Naive thymus-derived CD4-positive, alpha-beta T cell (primary cell): ENCODE measurements at regions of chr3 and their contacts with region 1.

Region 1: GRCh38 chr3:36876181-36876936 is 68.5 kb downstream of the TRANK1 start:
- DNase-seq: peak in 8 of 9 donors; percentile 26 to 73 (median 62)
- ATAC-seq: peak; percentile 93
- H3K4me3 ChIP-seq: peak overlapping the region; percentile 39
- H3K4me3 Mint-ChIP-seq: peak overlapping the region; percentile 67 to 88 (median 80)
- H3K27ac ChIP-seq: peak overlapping the region; percentile 73
- H3K27ac Mint-ChIP-seq: peak overlapping the region; percentile 91 to 96 (median 95)
- H3K4me1 ChIP-seq: peaks cover 21 to 45% of the 10 kb centered on the region in 2 donors
- H3K4me1 Mint-ChIP-seq: peaks cover 34 to 68% (median 55%) of the 10 kb centered on the region in 7 donors
- H3K27me3 ChIP-seq: no peaks in the 10 kb centered on the region
- H3K27me3 Mint-ChIP-seq: peaks cover 0 to 7% (median 0%) of the 10 kb centered on the region in 5 donors

Region 2: DNA sequence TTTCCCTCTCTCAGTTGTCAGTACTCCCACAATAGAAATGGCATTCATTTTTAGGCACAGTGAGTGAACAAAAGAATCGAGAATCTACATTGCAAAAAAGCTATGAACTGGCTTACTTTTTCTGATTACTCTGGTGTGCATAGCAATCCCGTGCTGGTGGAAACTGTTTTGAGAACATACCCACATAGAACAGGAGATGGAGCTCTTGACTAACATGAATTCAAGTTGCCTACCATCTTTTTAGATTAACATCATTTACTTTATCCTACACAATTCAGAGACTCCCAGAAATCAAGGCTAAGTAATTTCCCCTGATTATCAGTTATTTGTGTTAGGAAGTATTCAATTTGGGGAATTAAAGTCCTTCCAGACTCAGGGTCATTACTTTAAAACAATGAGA is 910.5 kb before region 1 on chr3:
- CTCF ChIA-PET with region 1: no interaction called
- POLR2A ChIA-PET with region 1: no interaction called
- intact Hi-C with region 1: no loop called
- DNase-seq: peak in 2 of 9 donors; percentile 0 to 5
- ATAC-seq: no peak
- H3K4me3 ChIP-seq: no peak overlapping the region
- H3K4me3 Mint-ChIP-seq: no peak overlapping the region
- H3K27ac ChIP-seq: no peak overlapping the region
- H3K27ac Mint-ChIP-seq: no peak overlapping the region
- H3K4me1 ChIP-seq: no peaks in the 10 kb centered on the region
- H3K4me1 Mint-ChIP-seq: peaks cover 0 to 27% (median 5%) of the 10 kb centered on the region in 7 donors
- H3K27me3 ChIP-seq: no peaks in the 10 kb centered on the region
- H3K27me3 Mint-ChIP-seq: no peaks in the 10 kb centered on the region

Region 3: DNA sequence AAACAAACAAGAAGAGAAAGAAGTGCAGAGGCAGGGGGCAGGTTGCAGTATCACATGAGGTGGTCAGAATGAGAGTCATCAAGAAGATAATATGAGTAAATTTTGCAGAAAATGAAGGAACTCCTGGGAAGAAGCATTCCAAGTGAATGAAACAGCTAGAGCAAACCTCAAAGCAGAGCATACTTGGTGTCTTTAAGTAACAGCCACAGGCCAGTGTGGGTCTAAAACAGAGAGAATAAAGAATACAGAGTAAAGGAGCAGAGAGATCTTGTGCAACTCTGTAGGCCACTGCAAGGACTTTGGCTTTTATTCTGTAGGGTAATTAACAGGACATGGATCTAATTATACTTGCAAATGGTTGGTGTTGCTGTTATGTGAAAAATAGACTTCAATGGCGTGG is 414.8 kb before region 1 on chr3:
- CTCF ChIA-PET with region 1: no interaction called
- POLR2A ChIA-PET with region 1: no interaction called
- intact Hi-C with region 1: no loop called
- DNase-seq: no peak
- ATAC-seq: no peak
- H3K4me3 ChIP-seq: no peak overlapping the region
- H3K4me3 Mint-ChIP-seq: no peak overlapping the region
- H3K27ac ChIP-seq: no peak overlapping the region
- H3K27ac Mint-ChIP-seq: no peak overlapping the region
- H3K4me1 ChIP-seq: no peaks in the 10 kb centered on the region
- H3K4me1 Mint-ChIP-seq: no peaks in the 10 kb centered on the region
- H3K27me3 ChIP-seq: no peaks in the 10 kb centered on the region
- H3K27me3 Mint-ChIP-seq: peaks cover 0 to 7% (median 0%) of the 10 kb centered on the region in 5 donors

Region 4: DNA sequence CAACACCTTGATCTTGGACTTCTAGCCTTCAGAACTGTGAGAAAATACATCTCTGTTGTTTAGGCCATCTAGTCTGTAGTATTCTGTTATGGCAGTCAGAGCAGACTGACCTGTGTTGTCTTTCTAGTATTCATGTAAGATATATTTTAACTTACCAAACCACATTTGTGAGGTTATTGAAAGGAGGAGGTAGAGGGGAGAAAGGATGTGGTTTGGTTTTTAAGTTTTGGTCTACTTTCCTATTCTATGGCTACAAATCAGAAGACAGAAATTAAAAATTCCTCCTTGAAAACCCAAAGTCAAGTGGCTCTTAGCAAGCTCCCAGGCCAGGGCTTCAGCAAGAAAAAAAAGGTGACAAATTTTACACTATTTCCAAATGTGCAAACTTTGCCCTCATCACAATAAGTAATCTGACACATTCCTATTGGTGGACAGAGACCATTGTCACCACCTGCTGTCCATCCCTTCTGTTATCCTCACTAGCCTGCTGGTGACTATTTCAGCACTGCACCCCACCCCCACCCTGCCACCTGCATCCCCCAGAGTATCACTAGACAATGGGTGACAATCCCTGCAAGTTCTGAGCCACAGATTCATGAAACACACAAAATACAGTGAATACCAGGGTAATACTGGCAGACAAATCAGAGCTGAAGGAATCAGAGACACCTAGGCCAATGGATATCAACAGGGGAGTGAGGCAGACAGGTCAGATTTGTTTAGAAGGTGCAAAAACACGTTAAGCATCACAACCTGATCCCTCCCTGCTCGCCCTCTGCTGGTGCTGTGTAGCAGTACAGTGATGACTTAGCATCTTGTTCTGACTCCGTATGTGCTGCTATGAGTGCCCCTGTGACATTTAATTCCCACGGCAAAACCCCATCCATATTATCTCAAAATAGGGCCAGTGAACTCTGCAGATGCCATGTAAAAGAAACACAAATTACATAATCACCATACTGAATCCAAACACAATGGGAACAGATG is 33.0 kb before region 1 on chr3:
- CTCF ChIA-PET with region 1: interaction called, 3 read pairs
- POLR2A ChIA-PET with region 1: interaction called, 4 read pairs
- intact Hi-C with region 1: loop called in 1 of 2 experiments (anchors 5 kb)
- DNase-seq: peak in 7 of 9 donors; percentile 16 to 48 (median 25)
- ATAC-seq: peak; percentile 86
- H3K4me3 ChIP-seq: no peak overlapping the region
- H3K4me3 Mint-ChIP-seq: peak overlapping the region in 9 of 10 donors; percentile 9 to 62 (median 50)
- H3K27ac ChIP-seq: no peak overlapping the region
- H3K27ac Mint-ChIP-seq: peak overlapping the region; percentile 12 to 77 (median 45)
- H3K4me1 ChIP-seq: peaks cover 16 to 18% of the 10 kb centered on the region in 2 donors
- H3K4me1 Mint-ChIP-seq: peaks cover 18 to 41% (median 36%) of the 10 kb centered on the region in 7 donors
- H3K27me3 ChIP-seq: no peaks in the 10 kb centered on the region
- H3K27me3 Mint-ChIP-seq: no peaks in the 10 kb centered on the region

Region 5: DNA sequence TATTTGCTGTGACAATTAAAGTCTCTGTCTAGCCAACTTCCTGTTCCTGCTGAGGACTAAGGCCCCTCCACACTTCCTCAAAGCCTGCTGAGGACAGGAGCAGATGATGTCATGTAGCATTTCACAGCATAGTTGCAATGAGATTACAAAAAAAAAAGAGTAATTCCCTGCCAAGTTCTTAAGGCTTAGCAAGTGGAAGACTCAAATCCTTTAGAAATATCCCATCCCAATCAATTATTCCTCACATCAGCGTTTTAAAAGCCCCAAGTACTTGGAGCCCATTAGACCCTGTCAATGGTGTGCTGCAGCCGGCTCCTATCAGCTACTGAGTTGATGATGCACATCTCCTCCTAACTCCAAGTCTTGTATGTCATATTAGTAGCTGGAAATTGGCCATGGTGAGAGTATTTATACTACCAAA is 16.8 kb after region 1 on chr3:
- CTCF ChIA-PET with region 1: no interaction called
- POLR2A ChIA-PET with region 1: interaction called, 7 read pairs
- intact Hi-C with region 1: loop called in 1 of 2 experiments (anchors 2 kb)
- DNase-seq: peak in 7 of 9 donors; percentile 31 to 80 (median 69)
- ATAC-seq: peak; percentile 92
- H3K4me3 ChIP-seq: no peak overlapping the region
- H3K4me3 Mint-ChIP-seq: peak overlapping the region in 8 of 10 donors; percentile 17 to 64 (median 48)
- H3K27ac ChIP-seq: peak overlapping the region; percentile 59
- H3K27ac Mint-ChIP-seq: peak overlapping the region; percentile 58 to 95 (median 94)
- H3K4me1 ChIP-seq: peaks cover 29 to 38% of the 10 kb centered on the region in 2 donors
- H3K4me1 Mint-ChIP-seq: peaks cover 45 to 75% (median 57%) of the 10 kb centered on the region in 7 donors
- H3K27me3 ChIP-seq: no peaks in the 10 kb centered on the region
- H3K27me3 Mint-ChIP-seq: no peaks in the 10 kb centered on the region

Region 6: DNA sequence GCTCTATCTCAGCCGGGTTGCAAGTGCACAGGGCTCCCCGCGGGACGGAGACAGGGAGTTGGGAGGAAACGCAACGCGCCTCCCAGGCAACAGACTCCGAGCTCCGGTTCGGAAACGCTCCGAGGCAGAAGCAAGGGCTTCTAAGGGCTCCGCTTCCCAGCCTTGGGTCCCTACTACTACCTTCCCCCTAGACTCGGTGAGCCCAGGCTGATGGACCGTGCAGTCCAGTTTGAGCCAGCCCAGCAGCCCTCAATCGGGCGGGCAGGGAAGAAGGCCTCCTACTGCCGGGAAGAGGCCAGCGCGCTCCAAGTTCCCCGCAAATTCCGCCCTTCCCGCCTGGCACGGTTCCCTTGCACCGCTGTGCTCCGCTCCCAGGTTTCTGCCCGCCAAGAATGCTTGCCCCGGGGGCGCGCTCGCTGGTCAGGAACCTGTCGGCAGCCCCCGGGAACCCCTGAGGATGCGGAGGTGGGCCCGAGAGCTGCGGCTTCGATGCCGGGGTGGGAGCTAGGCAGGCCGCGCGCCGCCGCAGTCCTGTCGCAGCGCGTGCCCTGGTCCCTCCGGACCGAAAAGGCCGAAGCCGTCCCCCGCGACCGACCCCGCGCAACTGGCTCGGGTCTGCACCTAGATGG is 67.8 kb after region 1 on chr3:
- CTCF ChIA-PET with region 1: interaction called, 3 read pairs
- POLR2A ChIA-PET with region 1: interaction called, 12 read pairs
- intact Hi-C with region 1: loop called in 1 of 2 experiments (anchors 2 kb)
- DNase-seq: peak; percentile 14 to 42 (median 28)
- ATAC-seq: peak; percentile 46
- H3K4me3 ChIP-seq: peak overlapping the region; percentile 70
- H3K4me3 Mint-ChIP-seq: peak overlapping the region; percentile 79 to 91 (median 85)
- H3K27ac ChIP-seq: peak overlapping the region; percentile 74
- H3K27ac Mint-ChIP-seq: peak overlapping the region; percentile 42 to 87 (median 63)
- H3K4me1 ChIP-seq: peaks cover 5 to 6% of the 10 kb centered on the region in 2 donors
- H3K4me1 Mint-ChIP-seq: peaks cover 0 to 33% (median 26%) of the 10 kb centered on the region in 7 donors
- H3K27me3 ChIP-seq: no peaks in the 10 kb centered on the region
- H3K27me3 Mint-ChIP-seq: peaks cover 0 to 28% (median 0%) of the 10 kb centered on the region in 5 donors

Region 7: DNA sequence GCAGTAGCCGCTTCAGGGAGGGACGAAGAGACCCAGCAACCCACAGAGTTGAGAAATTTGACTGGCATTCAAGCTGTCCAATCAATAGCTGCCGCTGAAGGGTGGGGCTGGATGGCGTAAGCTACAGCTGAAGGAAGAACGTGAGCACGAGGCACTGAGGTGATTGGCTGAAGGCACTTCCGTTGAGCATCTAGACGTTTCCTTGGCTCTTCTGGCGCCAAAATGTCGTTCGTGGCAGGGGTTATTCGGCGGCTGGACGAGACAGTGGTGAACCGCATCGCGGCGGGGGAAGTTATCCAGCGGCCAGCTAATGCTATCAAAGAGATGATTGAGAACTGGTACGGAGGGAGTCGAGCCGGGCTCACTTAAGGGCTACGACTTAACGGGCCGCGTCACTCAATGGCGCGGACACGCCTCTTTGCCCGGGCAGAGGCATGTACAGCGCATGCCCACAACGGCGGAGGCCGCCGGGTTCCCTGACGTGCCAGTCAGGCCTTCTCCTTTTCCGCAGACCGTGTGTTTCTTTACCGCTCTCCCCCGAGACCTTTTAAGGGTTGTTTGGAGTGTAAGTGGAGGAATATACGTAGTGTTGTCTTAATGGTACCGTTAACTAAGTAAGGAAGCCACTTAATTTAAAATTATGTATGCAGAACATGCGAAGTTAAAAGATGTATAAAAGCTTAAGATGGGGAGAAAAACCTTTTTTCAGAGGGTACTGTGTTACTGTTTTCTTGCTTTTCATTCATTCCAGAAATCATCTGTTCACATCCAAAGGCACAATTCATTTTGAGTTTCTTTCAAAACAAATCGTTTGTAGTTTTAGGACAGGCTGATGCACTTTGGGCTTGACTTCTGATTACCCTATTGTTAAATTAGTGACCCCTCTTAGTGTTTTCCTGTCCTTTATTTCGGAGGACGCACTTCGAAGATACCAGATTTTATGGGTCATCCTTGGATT is 117.2 kb after region 1 on chr3 and contains the start of gene MLH1:
- CTCF ChIA-PET with region 1: no interaction called
- POLR2A ChIA-PET with region 1: interaction called, 11 read pairs
- intact Hi-C with region 1: loop called in 1 of 2 experiments (anchors 1 kb)
- DNase-seq: peak; percentile 91 to 100 (median 99)
- ATAC-seq: peak; percentile 90
- H3K4me3 ChIP-seq: peak within 1 kb of the TSS; percentile 80
- H3K4me3 Mint-ChIP-seq: peak within 1 kb of the TSS in 1 of 10 donors; percentile 26
- H3K27ac ChIP-seq: peak within 1 kb of the TSS; percentile 83
- H3K27ac Mint-ChIP-seq: no peak within 1 kb of the TSS
- H3K4me1 ChIP-seq: peaks cover 36 to 40% of the 10 kb centered on the region in 2 donors
- H3K4me1 Mint-ChIP-seq: peaks cover 23 to 43% (median 38%) of the 10 kb centered on the region in 7 donors
- H3K27me3 ChIP-seq: no peaks in the 10 kb centered on the region
- H3K27me3 Mint-ChIP-seq: no peaks in the 10 kb centered on the region
- total RNA-seq, gene MLH1: 26.4 to 42.0 (median 31.7) TPM